IMR-90 (cell line): ENCODE measurements at regions of chr13 and their contacts with region 1.

Region 1: GRCh38 chr13:80336776-80337287 is 4.1 kb downstream of the SPRY2 start:
- DNase-seq: no peak
- ATAC-seq: no peak
- H3K4me3 ChIP-seq: peak overlapping the region; percentile 88; the same call in 1 of the 2 replicates
- H3K27ac ChIP-seq: peak overlapping the region; percentile 6; the same call in 1 of the 2 replicates
- H3K4me1 ChIP-seq: peaks cover 12% of the 10 kb centered on the region
- H3K27me3 ChIP-seq: no peaks in the 10 kb centered on the region
- CTCF ChIP-seq: no peak
- POLR2A ChIP-seq: no peak
- RAD21 ChIP-seq: no peak

Region 2: GRCh38 chr13:80083853-80084676 is 252.8 kb before region 1 on chr13:
- CTCF ChIA-PET with region 1: no interaction called
- POLR2A ChIA-PET with region 1: no interaction called
- dilution Hi-C with region 1: no loop called
- in situ Hi-C with region 1: no loop called
- intact Hi-C with region 1: loop called (anchors 1 kb)
- DNase-seq: peak; percentile 93
- ATAC-seq: peak; percentile 76
- H3K4me3 ChIP-seq: no peak overlapping the region; the same call in 1 of the 2 replicates
- H3K27ac ChIP-seq: peak overlapping the region; percentile 74
- H3K4me1 ChIP-seq: peaks cover 8% of the 10 kb centered on the region
- H3K27me3 ChIP-seq: no peaks in the 10 kb centered on the region
- CTCF ChIP-seq: no peak
- POLR2A ChIP-seq: no peak
- RAD21 ChIP-seq: 0 out of 2 replicates have a peak, but pooled peaks have one; percentile 6